A549 (cell line): ENCODE measurements at regions of chr9 and their contacts with region 1.

Region 1: DNA sequence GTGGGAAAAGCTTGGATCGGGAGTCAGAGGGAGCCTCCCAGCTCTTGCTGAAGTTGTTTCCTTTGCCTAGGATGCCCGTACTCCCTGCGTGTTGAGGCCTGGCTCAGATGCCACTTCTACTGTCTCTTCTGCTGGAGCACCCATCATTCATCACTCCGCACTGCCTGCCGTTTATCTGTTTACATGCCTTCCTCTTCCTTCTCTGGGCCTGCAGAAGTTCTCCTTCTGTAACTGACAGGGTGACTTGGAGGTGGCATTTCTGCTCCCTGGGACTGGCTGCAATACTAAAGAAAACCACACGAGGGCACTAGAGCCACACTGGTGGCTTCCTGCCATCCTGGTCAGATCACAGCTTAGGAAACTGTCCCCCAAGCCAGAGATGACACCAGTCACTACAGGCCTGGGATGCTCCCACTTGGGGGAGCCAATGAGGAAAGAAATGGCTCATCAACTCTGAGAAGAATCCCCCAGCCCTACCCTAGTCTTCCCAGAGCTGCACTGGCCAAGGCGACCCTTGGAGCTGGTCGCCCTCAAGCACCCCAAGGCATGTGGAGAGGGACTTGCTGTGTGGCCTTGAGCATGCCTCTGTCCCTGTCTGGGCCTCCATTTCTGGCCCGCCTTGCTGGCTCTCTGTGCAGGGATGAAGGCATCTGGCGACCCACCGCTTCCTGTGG is 9.7 kb upstream of the SLC25A51 start:
- DNase-seq: peak; percentile 78 to 86
- ATAC-seq: peak; percentile 73 to 85
- H3K4me3 ChIP-seq: no peak overlapping the region
- H3K27ac ChIP-seq: peak overlapping the region; percentile 7 to 73; a peak in 4 of 6 replicates
- H3K4me1 ChIP-seq: peaks cover 31% of the 10 kb centered on the region
- CTCF ChIP-seq: peak; percentile 96
- EP300 ChIP-seq: no peak
- POLR2A ChIP-seq: no peak
- RAD21 ChIP-seq: peak; percentile 99

Region 2: DNA sequence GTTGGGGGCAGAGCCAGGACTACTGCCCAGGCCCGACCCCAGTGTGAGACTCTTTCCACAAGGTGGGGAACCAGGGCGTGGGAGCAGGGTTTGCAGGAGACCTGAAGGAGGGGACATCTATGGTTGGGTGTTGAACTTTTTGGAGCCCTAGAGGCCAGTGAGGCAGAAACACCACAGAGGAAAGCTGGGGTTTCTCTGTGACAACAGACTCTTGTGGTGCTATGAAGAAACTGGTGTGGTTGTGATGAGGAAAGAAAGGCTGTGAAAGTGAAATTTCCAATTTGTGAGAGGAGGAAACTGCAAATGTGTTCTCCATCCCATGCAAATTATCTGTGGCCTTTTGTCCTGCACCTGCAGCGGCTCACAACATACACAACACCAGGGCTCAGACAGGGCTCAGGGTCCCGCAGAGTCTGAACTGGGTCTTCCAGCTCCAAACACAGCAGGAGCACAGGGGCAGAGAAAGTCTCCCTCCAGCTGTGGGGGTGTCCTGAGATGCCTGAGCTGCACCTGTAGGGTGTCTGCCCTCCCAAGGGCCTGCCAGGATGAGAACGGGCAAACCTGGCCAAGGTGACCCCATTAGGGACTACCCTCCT is 542.6 kb before region 1 on chr9:
- CTCF ChIA-PET with region 1: no interaction called
- POLR2A ChIA-PET with region 1: no interaction called
- DNase-seq: no peak
- ATAC-seq: peak in 1 of 2 experiments; percentile 37; a peak in 3 of 6 replicates
- H3K4me3 ChIP-seq: no peak overlapping the region
- H3K27ac ChIP-seq: no peak overlapping the region
- H3K4me1 ChIP-seq: no peaks in the 10 kb centered on the region
- CTCF ChIP-seq: no peak
- EP300 ChIP-seq: no peak
- POLR2A ChIP-seq: no peak
- RAD21 ChIP-seq: no peak

Region 3: DNA sequence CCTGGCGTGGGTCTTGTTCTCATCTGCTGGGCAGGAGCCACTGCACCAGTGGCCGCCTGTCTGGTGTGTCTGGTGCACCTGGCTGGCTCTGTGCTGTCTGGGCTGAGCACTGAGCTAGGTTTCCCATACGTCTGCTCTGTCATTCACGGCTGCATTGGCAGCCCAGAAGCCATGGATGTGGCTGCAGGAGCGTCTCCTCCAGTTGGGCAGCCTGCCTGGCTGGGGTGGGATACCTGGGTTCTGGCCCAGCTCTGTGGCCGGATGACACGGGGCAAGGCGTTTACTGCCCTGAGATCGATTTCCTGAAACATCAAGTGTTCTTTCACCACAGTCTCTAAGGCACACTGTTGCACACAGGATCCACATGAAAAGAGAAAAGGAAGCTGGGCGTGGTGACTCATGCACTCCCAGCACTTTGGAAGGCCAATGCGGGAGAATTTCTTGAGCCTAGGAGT is 15.9 kb after region 1 on chr9:
- CTCF ChIA-PET with region 1: interaction called, 35 read pairs
- POLR2A ChIA-PET with region 1: no interaction called
- DNase-seq: no peak
- ATAC-seq: no peak
- H3K4me3 ChIP-seq: no peak overlapping the region
- H3K27ac ChIP-seq: no peak overlapping the region
- H3K4me1 ChIP-seq: peaks cover 22% of the 10 kb centered on the region
- CTCF ChIP-seq: no peak
- EP300 ChIP-seq: no peak
- POLR2A ChIP-seq: no peak
- RAD21 ChIP-seq: no peak

Region 4: DNA sequence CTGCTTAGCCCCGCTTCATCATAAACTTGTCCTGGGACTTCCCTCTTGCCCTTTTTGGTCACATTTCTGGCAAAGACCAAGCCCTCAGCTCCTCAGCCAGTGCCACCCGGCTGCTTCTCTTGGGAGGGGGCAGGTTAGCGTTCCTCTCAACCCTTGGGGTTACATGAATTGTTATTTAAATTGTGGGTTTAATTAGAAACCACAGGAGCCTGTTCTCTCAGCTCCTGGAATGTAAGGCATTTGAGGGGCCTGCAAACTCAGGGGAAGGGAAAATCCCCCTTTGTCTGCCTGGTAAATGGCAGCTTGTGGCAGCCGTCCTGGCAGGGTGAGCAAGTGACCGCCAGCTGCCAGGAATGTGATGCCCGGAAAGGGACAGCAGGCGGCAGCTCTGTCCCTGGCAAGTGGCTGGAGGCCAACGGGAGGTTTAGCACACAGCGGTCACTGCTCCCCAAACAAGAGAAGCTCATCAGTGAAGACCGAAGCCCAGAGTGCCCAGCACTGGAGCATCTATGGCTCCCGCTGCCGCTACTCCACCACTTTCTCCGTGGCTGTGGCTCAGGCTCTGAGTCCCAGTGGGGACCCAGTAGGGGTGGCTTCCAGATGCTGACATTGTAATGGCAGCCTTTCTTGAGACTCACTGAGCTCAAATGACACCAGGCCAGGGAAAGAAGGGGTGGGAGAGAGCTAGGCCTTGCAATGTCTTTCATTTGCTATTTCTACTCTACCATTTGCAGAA is 103.7 kb after region 1 on chr9:
- CTCF ChIA-PET with region 1: interaction called, 11 read pairs
- POLR2A ChIA-PET with region 1: interaction called, 4 read pairs
- DNase-seq: peak; percentile 63 to 73
- ATAC-seq: peak; percentile 55 to 58; a peak in 5 of 6 replicates
- H3K4me3 ChIP-seq: 0 out of 3 replicates have a peak overlapping the region, but pooled peaks have one; percentile 7
- H3K27ac ChIP-seq: peak overlapping the region; percentile 96 to 97
- H3K4me1 ChIP-seq: peaks cover 68% of the 10 kb centered on the region
- CTCF ChIP-seq: peak; percentile 60
- EP300 ChIP-seq: no peak; a peak in 1 of 5 replicates
- POLR2A ChIP-seq: no peak
- RAD21 ChIP-seq: peak; percentile 81 to 84

Region 5: GRCh38 chr9:38068866-38069629 is 155.4 kb after region 1 on chr9 and contains the start of gene SHB:
- CTCF ChIA-PET with region 1: interaction called, 16 read pairs
- POLR2A ChIA-PET with region 1: no interaction called
- DNase-seq: peak; percentile 71 to 83
- ATAC-seq: peak; percentile 64 to 65
- H3K4me3 ChIP-seq: peak within 1 kb of the TSS; percentile 93
- H3K27ac ChIP-seq: peak within 1 kb of the TSS; percentile 95 to 100
- H3K4me1 ChIP-seq: peaks cover 37% of the 10 kb centered on the region
- CTCF ChIP-seq: peak; percentile 22; the same call in 2 of the 3 replicates
- EP300 ChIP-seq: no peak
- POLR2A ChIP-seq: peak; percentile 87
- RAD21 ChIP-seq: no peak; a peak in 3 of 5 replicates
- polyA plus RNA-seq, gene SHB: 15.4 and 16.4 TPM in 2 replicates

Region 6: GRCh38 chr9:38329968-38330367 is 416.4 kb after region 1 on chr9:
- CTCF ChIA-PET with region 1: interaction called, 15 read pairs
- POLR2A ChIA-PET with region 1: no interaction called
- DNase-seq: no peak
- ATAC-seq: no peak
- H3K4me3 ChIP-seq: no peak overlapping the region
- H3K27ac ChIP-seq: no peak overlapping the region
- H3K4me1 ChIP-seq: no peaks in the 10 kb centered on the region
- CTCF ChIP-seq: no peak
- EP300 ChIP-seq: no peak
- POLR2A ChIP-seq: no peak
- RAD21 ChIP-seq: no peak

Region 7: GRCh38 chr9:38392235-38393127 is 478.9 kb after region 1 on chr9 and contains the start of gene ALDH1B1:
- CTCF ChIA-PET with region 1: interaction called, 13 read pairs
- POLR2A ChIA-PET with region 1: no interaction called
- DNase-seq: peak; percentile 86 to 97
- ATAC-seq: peak; percentile 98 to 100
- H3K4me3 ChIP-seq: peak within 1 kb of the TSS; percentile 66
- H3K27ac ChIP-seq: peak within 1 kb of the TSS; percentile 86 to 96
- H3K4me1 ChIP-seq: peaks cover 14% of the 10 kb centered on the region; the same call in 1 of the 3 replicates
- CTCF ChIP-seq: peak; percentile 32; the same call in 2 of the 3 replicates
- EP300 ChIP-seq: no peak
- POLR2A ChIP-seq: peak; percentile 71
- RAD21 ChIP-seq: peak in 1 of 2 experiments; percentile 14; a peak in 1 of 5 replicates
- polyA plus RNA-seq, gene ALDH1B1: 39.7 and 40.2 TPM in 2 replicates

Region 8: GRCh38 chr9:38629511-38629910 is 715.9 kb after region 1 on chr9:
- CTCF ChIA-PET with region 1: no interaction called
- POLR2A ChIA-PET with region 1: no interaction called
- DNase-seq: no peak
- ATAC-seq: no peak
- H3K4me3 ChIP-seq: no peak overlapping the region
- H3K27ac ChIP-seq: no peak overlapping the region
- H3K4me1 ChIP-seq: no peaks in the 10 kb centered on the region
- CTCF ChIP-seq: no peak
- EP300 ChIP-seq: no peak
- POLR2A ChIP-seq: no peak
- RAD21 ChIP-seq: no peak